ENCODE measurements at regions of chr17 and their contacts with region 1.

Region 1: DNA sequence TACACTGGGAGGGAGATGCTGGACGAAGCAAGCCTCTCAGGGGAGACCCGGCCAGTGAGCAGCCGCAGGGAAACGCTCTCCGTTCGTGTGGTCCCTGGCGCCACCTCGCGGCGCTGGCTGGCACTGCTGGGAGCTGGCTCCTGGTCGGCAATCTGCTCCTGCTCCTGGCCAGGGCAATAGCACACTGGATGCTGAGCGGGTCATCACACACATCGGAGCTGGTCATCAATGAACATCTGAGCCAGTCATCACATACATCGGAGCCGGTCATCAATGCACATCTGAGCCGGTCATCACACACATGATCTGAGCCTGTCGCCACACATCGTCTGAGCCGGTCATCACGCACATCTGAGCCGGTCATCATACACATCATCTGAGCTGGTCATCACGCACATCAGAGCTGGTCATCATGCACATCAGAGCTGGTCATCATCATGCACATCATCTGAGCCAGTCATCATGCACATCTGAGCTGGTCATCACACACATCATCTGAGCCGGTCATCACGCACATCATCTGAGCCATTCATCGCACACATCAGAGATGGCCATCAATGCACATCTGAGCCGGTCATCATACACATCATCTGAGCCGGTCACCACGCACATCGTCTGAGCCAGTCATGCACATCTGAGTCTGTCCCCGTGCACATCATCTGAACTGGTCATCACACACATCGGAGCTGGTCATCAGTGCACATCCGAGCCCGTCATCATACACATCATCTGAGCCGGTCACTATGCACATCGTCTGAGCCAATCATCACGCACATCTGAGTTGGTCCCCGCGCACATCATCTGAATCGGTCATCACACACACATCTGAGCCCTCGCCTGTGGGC is 217.3 kb downstream of the RBFOX3 start:
- DNase-seq: peak; percentile 85

Region 2: GRCh38 chr17:78865682-78866390 is 527.7 kb before region 1 on chr17:
- intact Hi-C with region 1: no loop called
- DNase-seq: peak; percentile 93

Region 3: GRCh38 chr17:79019632-79020584 is 373.7 kb before region 1 on chr17:
- intact Hi-C with region 1: loop called (anchors 2 kb)
- DNase-seq: peak; percentile 76

Region 4: DNA sequence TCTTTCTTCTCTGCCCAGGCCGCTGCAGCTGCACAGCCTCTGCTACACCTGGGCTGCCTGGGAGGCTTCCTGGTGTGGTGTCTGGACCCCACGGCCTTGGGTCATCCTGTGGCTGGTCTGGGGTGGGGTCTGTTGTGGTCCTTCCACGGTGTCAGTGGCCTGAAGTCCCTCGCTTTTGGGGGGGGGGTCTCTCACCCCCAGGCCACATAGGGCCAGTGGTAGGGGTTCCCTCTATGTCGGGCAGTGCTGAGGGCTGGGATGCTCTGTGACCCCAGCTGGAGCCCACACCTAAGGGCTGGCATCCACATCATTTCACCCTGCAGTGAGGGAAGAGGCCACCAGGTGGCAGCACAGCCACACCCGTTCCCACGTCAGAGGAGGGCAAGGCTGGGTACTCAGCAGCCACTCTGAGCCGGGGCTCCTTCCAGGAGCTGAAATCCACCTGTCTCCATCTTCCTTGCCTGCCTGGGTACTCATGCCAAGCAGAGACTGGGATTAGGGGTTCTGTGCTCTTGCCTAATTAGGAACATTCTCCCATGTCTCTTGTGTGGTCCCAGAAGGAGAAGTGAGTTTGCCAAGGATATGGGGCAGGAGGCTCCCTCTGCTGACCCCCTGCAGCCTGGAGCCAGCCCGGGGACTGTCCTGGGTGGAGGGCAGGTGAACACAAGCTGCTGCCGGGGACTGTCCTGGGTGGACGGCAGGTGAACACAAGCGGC is 306.0 kb before region 1 on chr17:
- intact Hi-C with region 1: loop called (anchors 2 kb)
- DNase-seq: peak; percentile 86

Region 5: DNA sequence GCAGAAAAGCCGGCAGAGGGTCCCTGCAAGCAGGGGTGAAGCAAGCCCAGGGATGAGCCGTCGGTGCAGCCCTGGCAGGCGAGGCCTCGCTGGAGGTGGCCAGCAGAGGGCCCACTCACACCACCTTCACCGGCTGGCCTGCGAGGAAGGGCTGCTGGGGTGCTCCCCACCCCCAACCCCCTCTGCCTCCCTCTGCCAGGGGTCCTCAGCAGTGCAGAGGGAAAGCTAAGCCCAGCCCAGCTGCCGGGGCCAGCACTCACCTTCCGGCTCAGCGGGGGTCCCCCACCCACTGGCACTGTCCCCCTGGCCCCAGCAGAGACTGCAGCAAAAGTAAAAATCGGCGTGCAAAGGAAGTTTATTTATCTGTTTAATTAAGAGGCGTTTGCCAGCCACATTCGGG is 205.5 kb before region 1 on chr17:
- intact Hi-C with region 1: loop called (anchors 2 kb)
- DNase-seq: no peak

Region 6: DNA sequence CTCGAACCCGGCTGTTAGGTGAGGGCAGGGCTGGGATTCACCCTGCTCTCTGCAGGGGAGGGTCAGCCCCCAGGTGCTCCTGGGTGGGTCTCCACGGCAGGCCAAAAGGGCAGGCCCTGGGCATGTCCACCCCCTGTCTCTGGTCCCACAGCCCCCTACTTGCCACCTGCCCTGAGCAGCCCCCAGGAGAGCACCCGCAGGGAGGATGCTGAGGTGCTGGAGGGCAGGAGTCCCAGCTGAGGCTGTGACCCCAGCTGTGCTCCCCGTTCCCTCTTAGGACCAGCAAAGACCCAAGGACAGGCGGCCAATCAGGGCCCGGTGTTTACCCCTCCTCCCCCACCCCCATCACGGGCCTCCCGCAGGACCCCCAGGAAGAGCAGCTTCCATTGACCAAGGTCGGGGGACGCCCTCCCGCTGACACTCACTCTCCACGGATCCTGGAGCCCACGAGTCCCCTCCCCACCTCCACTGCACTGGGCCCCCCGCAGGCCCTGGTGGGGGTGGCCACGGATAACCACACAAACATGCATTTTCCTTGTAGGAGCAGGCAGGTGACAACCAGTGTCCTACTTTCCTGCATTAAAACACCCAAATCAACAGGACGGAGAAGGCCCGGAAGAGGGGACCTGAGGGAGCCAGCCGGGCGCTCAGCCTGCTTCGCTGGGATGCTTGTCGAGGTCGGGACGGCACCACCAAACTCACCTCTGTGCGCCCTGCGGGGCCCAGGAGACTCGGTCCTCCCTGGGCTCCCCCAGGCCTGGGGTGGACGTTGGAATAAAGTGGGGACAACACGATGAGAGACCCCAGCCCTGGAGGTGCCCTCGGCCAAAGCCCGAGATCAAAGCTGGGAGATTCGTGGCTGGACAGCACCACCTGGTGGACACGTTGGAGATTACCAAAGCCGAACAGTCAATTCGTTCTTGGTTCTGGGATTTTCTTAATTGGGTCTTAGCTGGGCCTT is 314.6 kb after region 1 on chr17:
- intact Hi-C with region 1: loop called (anchors 10 kb)
- DNase-seq: no peak

Measured in cardiac septum (tissue), 1 donor.